A549 (cell line): ENCODE measurements at regions of chr15 and their contacts with region 1.

Region 1: GRCh38 chr15:40743921-40744814 is 10.9 kb downstream of the RMDN3 start:
- DNase-seq: peak in 1 of 2 experiments; percentile 56
- ATAC-seq: peak; percentile 58 to 75
- H3K4me3 ChIP-seq: no peak overlapping the region
- H3K27ac ChIP-seq: peak overlapping the region in 1 of 2 experiments; percentile 8; a peak in 2 of 6 replicates
- H3K4me1 ChIP-seq: peaks cover 14% of the 10 kb centered on the region
- CTCF ChIP-seq: no peak
- EP300 ChIP-seq: no peak
- POLR2A ChIP-seq: no peak
- RAD21 ChIP-seq: no peak

Region 2: GRCh38 chr15:40650479-40650878 is 93.7 kb before region 1 on chr15:
- CTCF ChIA-PET with region 1: no interaction called
- POLR2A ChIA-PET with region 1: no interaction called
- DNase-seq: no peak
- ATAC-seq: no peak
- H3K4me3 ChIP-seq: no peak overlapping the region
- H3K27ac ChIP-seq: no peak overlapping the region
- H3K4me1 ChIP-seq: no peaks in the 10 kb centered on the region
- CTCF ChIP-seq: no peak
- EP300 ChIP-seq: no peak
- POLR2A ChIP-seq: no peak
- RAD21 ChIP-seq: no peak

Region 3: DNA sequence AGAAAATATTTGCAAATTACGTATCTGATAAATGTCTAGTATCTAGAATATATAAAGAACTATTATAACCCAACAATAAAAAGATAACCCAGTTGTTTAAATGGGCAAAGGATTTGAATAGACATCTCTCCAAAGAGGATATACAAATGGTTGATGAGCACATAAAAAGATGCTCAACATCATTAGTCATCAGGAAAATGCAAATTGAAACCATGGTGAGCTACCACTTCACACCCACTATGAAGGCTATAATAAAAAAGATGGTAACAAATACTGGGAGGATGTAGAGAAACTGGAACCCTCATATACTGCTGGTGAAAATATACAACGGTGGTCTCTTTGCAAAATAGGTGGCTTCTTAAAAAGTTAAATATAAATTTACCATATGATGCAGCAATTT is 21.2 kb before region 1 on chr15:
- CTCF ChIA-PET with region 1: interaction called, 10 read pairs
- POLR2A ChIA-PET with region 1: no interaction called
- DNase-seq: no peak
- ATAC-seq: no peak
- H3K4me3 ChIP-seq: no peak overlapping the region
- H3K27ac ChIP-seq: no peak overlapping the region
- H3K4me1 ChIP-seq: no peaks in the 10 kb centered on the region
- CTCF ChIP-seq: no peak
- EP300 ChIP-seq: no peak
- POLR2A ChIP-seq: no peak
- RAD21 ChIP-seq: no peak

Region 4: DNA sequence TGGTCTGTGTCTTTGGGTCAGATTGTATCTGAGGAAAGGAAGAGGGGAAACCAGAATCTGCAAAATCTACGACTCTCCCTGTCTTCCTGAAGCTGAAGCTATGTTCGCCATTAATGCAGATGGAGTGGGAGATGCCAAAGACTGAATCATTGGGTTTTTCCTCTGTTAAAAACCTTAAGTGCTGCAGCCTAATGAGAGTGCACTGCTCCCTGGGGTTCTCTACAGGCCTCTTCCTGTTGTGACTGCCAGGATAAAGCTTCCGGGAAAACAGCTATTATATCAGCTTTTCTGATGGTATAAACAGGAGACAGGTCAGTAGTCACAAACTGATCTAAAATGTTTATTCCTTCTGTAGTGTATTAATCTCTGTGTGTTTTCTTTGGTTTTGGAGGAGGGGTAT is 13.1 kb before region 1 on chr15:
- CTCF ChIA-PET with region 1: interaction called, 12 read pairs
- POLR2A ChIA-PET with region 1: no interaction called
- DNase-seq: no peak
- ATAC-seq: no peak
- H3K4me3 ChIP-seq: no peak overlapping the region
- H3K27ac ChIP-seq: no peak overlapping the region
- H3K4me1 ChIP-seq: no peaks in the 10 kb centered on the region
- CTCF ChIP-seq: no peak
- EP300 ChIP-seq: no peak
- POLR2A ChIP-seq: no peak
- RAD21 ChIP-seq: no peak